PC-9 (cell line): ENCODE measurements at regions of chr14 and their contacts with region 1.

Region 1: DNA sequence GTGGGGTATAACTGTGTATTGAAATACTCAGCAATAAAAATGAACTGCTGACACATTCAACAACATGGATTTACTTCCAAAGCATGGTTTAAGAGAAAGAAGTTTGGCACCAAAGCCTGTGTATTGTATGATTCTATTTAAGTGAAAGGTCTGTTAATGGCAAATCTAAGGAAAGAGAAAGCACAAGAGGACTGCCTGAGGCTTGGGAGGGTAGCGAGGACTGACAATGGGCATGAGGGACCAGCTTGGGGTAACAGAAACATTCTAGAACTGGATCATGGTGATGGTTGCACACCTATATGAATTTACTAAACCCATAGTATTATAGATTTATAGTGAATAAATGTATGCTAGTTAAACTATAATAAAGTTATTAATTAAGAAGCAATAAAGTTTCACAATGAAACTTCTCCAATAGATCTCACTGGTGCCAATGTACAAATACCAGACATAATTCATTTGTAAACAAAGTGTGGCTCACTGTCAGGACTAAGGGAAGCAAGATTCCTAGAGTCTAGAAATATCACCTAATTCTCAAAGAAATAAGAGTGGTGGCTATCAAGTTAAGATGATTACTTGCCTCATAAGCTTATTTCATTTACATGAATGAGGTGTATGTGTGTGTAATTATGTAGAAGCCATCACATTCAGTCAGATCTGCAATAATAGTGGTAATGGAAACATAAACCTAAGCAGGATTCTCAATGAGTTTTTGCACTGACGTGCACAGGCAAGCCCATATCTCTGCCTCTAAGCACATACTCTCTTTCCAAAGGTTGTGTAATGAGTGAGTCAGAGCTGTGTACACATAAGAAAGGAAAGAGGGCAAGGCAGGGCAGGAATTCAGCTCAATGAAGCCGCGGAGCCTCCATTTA is 353.4 kb downstream of the KCNH5 start:
- DNase-seq: peak; percentile 58 to 95
- H3K4me3 ChIP-seq: peak overlapping the region; percentile 36; the same call in 1 of the 2 replicates
- H3K27ac ChIP-seq: peak overlapping the region; percentile 57
- H3K4me1 ChIP-seq: peaks cover 23% of the 10 kb centered on the region
- H3K27me3 ChIP-seq: no peaks in the 10 kb centered on the region
- CTCF ChIP-seq: no peak

Region 2: DNA sequence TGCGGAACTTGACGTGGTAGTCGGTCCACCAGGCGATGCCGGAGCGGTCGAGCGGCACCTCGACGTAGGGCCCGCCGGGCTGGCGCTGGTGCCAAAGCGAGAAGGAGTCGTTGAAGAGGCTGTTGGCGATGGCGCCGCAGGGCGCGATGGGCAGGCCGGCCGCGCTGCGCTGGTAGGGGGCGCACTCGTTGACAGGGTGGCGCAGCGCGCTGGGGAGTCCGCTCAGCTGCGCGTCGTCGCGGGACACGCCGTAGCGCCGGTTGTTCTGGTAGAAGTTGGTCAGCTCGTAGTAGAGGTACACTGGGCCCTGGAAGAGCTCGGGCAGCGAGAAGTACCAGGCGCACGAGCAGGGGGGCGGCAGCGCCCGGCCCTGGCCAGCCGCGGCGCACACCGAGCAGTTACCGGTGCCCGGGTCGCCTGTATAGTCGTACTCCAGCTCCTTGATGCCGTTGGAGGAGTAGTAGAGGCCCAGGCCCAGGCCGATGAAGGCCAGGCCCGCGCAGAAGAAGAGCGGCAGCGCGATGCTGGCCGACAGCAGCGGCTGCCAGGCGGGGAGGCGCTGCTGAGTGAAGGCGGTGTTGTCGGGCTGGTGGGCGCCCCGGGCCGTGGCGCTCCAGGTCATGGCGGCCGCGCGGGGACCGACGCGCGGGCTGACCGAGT is 1411.2 kb before region 1 on chr14:
- CTCF ChIA-PET with region 1: no interaction called
- POLR2A ChIA-PET with region 1: no interaction called
- intact Hi-C with region 1: loop called (anchors 5 kb)
- DNase-seq: peak; percentile 61 to 80
- H3K4me3 ChIP-seq: peak overlapping the region; percentile 93
- H3K27ac ChIP-seq: peak overlapping the region; percentile 86
- H3K4me1 ChIP-seq: peaks cover 44% of the 10 kb centered on the region
- H3K27me3 ChIP-seq: no peaks in the 10 kb centered on the region
- CTCF ChIP-seq: peak; percentile 70

Region 3: DNA sequence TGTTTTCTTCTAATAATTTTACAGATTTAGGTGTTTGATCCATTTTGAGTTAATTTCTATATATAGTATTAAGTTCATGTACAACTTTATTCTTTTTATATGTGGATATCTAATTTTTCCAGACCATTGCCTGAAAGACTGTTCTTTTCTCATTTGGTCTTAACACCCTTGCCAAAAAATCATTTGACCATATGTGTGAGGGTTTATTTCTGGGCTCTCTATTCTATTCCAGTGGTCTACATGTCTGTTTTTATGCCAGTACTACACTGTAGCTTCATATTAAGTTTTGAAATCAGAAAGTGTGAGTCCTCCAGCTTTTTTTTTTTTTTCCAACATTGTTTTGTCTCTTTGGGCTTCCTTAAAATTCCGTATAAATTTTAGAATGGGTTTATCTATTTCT is 200.7 kb before region 1 on chr14:
- CTCF ChIA-PET with region 1: no interaction called
- POLR2A ChIA-PET with region 1: no interaction called
- intact Hi-C with region 1: loop called (anchors 10 kb)
- DNase-seq: no peak
- H3K4me3 ChIP-seq: no peak overlapping the region
- H3K27ac ChIP-seq: no peak overlapping the region
- H3K4me1 ChIP-seq: no peaks in the 10 kb centered on the region
- H3K27me3 ChIP-seq: no peaks in the 10 kb centered on the region
- CTCF ChIP-seq: no peak